Vagina (tissue), 2 donors: ENCODE measurements at regions of chr1 and their contacts with region 1.

Region 1: DNA sequence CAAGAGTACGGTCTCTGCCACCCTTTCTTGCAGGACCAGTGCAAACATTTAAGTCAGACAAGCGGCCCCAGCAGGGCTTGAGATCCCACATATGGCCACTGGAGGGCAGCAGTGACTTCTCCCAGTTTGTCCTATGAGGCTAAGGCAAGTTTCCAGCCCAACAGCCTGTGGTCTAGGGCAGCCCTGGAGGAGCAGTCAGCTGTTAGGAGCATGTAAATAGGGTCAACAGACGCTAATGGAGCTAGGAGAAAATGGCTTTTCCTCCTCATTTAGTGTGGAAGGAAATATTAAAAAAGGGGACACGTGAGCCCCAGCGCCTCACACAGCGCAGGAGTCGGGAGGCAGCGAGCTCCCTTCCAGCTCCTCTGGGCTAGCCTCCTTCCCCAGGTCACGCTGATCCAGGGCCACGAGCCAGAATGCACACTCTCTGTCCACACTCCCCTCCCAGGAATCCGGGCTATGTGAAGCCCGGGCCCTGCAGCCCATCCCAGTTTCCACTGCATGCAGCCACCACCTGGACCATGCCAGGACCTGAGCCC is 95.6 kb downstream of the LAMC2 start:
- DNase-seq: peak in 1 of 2 donors; percentile 97
- H3K4me3 ChIP-seq: no peak overlapping the region
- H3K27ac ChIP-seq: peak overlapping the region; percentile 77
- H3K4me1 ChIP-seq: peaks cover 63% of the 10 kb centered on the region
- H3K27me3 ChIP-seq: no peaks in the 10 kb centered on the region
- CTCF ChIP-seq: peak; percentile 83 to 94 (median 84)
- POLR2A ChIP-seq: no peak

Region 2: GRCh38 chr1:182962554-182963115 is 319.0 kb before region 1 on chr1:
- intact Hi-C with region 1: loop called (anchors 10 kb)
- DNase-seq: peak in 1 of 2 donors; percentile 90
- H3K4me3 ChIP-seq: peak overlapping the region in 1 of 2 donors; percentile 26
- H3K27ac ChIP-seq: peak overlapping the region; percentile 83
- H3K4me1 ChIP-seq: peaks cover 6% of the 10 kb centered on the region
- H3K27me3 ChIP-seq: no peaks in the 10 kb centered on the region
- CTCF ChIP-seq: peak; percentile 64 to 96 (median 80)
- POLR2A ChIP-seq: peak in 1 of 2 donors; percentile 37

Region 3: DNA sequence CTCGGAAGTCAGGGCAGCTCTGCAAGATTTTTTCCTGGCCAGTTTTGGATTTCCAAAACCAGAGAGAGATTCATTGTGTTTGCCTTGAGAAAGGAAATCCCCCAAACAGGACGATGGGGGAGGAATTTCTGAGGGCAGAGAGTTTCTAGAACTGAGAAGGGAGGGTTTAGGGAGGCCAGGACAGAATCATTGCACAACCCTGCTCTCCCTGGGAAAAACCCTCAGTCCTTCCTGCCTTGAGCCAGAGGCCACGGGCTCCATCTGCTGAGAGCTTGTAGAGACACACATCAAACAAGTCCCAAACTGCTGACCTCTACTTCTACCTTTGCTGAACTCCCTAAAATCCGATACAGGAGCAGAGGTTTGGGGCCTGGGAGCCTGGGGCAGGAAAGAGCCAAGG is 36.8 kb after region 1 on chr1:
- intact Hi-C with region 1: loop called (anchors 5 kb)
- DNase-seq: peak in 1 of 2 donors; percentile 97
- H3K4me3 ChIP-seq: no peak overlapping the region
- H3K27ac ChIP-seq: peak overlapping the region; percentile 89
- H3K4me1 ChIP-seq: peaks cover 22% of the 10 kb centered on the region
- H3K27me3 ChIP-seq: no peaks in the 10 kb centered on the region
- CTCF ChIP-seq: peak; percentile 39 to 65 (median 64)
- POLR2A ChIP-seq: no peak

Region 4: GRCh38 chr1:183493548-183494246 is 212.1 kb after region 1 on chr1:
- intact Hi-C with region 1: no loop called
- DNase-seq: no peak
- H3K4me3 ChIP-seq: no peak overlapping the region
- H3K27ac ChIP-seq: no peak overlapping the region
- H3K4me1 ChIP-seq: peaks cover 12% of the 10 kb centered on the region
- H3K27me3 ChIP-seq: no peaks in the 10 kb centered on the region
- CTCF ChIP-seq: no peak
- POLR2A ChIP-seq: no peak